Activated CD4-positive, alpha-beta memory T cell treated with anti-CD3 and anti-CD28 coated beads for 36 hours (primary cell): ENCODE measurements at regions of chr10 and their contacts with region 1.

Region 1: GRCh38 chr10:122980209-122981065 is at the start of gene PSTK:
- DNase-seq: peak; percentile 91
- H3K4me3 Mint-ChIP-seq: peak within 1 kb of the TSS; percentile 82
- H3K27ac Mint-ChIP-seq: peak within 1 kb of the TSS; percentile 94
- H3K4me1 Mint-ChIP-seq: peaks cover 16% of the 10 kb centered on the region
- H3K27me3 Mint-ChIP-seq: no peaks in the 10 kb centered on the region
- total RNA-seq, gene PSTK: 3.2 to 3.4 TPM

Region 2: DNA sequence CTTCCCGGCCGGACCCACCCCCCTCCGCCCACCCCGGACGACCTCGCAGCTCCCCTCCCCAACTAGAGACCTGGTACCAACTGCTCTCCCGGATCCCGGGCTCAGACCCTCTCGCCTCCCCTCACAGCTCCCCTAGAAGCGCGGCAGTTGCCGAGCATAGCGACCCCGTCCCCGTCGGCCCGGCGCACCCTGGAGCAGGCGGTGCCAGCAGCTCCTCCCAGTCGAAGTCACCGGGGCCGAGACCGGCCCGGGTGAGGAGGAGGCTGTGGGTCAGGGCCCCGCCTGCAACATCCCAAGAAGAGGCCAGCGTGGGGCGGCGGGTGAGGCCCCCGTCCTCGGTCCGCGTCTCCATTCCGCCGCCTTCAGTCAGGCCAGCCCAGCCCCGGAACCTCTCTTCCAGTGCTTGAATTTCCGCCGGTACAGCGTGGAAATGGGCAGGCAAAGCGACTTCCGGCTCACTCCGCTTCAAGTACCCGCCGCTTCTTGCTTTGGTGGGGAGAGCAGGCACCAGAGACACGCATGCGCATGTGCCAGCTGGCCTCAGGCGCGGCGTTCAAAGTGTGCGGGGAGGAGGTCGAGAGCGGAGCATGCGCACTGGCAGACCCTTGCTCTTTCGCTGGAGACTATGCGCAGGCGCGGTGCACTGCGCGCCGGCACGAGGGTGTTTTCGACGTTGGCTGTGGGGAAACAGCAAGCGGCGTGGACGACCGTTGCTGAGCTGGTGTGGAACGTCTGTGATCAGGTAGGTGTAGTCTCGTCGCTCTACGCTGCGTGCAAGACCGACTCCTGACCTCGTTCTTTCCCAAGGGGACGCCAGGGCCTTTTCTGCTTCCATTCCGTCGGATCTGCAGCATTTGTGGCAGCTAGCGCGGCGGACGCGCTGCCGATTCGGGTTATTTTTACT is 26.4 kb before region 1 on chr10 and contains the start of gene C10orf88:
- CTCF ChIA-PET with region 1: interaction called, 14 read pairs
- POLR2A ChIA-PET with region 1: interaction called, 8 read pairs
- intact Hi-C with region 1: loop called (anchors 1 kb)
- DNase-seq: peak; percentile 98
- H3K4me3 Mint-ChIP-seq: peak within 1 kb of the TSS; percentile 82
- H3K27ac Mint-ChIP-seq: peak within 1 kb of the TSS; percentile 80
- H3K4me1 Mint-ChIP-seq: peaks cover 30% of the 10 kb centered on the region
- H3K27me3 Mint-ChIP-seq: peaks cover 1% of the 10 kb centered on the region
- total RNA-seq, gene C10orf88: 8.3 to 9.2 TPM